ENCODE measurements at regions of chr6 and their contacts with region 1.

Region 1: DNA sequence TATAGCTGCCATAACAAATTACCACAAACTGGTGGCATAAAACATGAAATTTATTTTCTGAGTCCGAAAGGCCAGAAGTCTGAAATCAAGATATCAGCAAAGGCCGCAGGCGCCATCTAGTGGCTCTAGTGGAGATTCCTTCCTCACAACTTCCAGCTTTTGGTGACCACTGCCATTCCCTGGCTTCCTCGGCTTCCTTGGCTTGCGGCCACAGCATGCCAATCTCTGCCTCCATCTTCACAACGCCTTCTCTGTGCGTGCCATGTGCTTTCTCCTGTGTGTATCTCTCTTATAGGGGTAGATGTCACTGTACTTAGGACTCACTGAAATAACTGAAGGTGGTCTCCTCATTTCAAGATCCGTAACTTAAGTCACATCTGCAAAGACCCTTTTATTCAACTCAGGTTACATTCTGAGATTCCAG is 5.4 kb upstream of the PLAGL1 start:
- DNase-seq: peak; percentile 73
- ATAC-seq: peak; percentile 79
- H3K4me3 ChIP-seq: no peak overlapping the region
- H3K27ac ChIP-seq: no peak overlapping the region
- H3K4me1 ChIP-seq: 0 out of 4 replicates have a peak, but pooled peaks cover 0 to 3% of the 10 kb centered on the region in 2 experiments
- H3K27me3 ChIP-seq: no peaks in the 10 kb centered on the region
- CTCF ChIP-seq: peak; percentile 86 to 90 (median 89)
- POLR2A ChIP-seq: no peak
- RAD21 ChIP-seq: peak; percentile 96

Region 2: DNA sequence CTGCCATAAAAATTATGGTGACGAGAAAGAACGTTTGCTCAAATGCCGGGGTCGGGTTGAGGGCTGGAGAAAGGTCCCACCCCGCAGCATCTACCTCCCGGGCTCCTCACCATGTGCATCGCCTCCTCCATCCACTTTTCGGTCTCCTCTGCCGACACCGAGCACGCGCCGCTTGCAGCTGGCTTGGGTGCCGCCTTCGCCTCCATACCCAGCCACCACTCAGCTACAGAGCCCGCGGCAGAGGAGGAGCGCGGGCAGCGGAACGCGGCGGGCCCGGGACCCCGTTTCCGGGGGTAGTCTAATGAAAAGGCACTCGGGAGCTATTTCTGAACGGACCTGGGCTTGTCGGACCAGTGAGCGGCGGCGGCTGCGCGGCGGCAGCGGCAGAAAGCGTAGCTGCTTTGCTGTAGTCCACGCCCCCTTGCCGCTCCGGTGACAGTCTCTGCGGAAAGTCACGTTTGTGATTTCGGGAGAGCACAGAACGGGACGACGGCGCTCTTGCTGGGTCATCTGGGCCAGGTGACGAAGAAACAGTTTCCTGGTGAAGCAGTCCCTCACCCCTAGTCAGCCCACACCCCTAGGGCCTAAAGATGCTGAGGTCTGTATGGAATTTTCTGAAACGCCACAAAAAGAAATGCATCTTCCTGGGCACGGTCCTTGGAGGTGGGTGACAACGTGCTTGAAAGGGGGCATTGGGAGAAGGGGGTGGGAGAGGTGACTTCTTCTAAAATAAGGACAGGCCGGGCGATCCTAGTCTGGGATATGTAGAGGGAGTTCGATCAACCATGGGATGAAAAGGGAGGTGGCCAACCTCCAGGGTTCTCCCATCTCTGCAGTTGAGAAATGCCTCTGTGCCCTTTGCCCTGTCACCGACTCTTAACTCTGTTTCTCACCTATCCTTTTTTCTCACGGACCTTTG is 562.8 kb before region 1 on chr6 and contains the starts of genes ADAT2 and PEX3:
- CTCF ChIA-PET with region 1: no interaction called
- POLR2A ChIA-PET with region 1: no interaction called
- RAD21 ChIA-PET with region 1: no interaction called
- intact Hi-C with region 1: loop called (anchors 2 kb)
- DNase-seq: peak; percentile 90
- ATAC-seq: peak; percentile 98
- H3K4me3 ChIP-seq: peak within 1 kb of the TSS; percentile 62 to 95
- H3K27ac ChIP-seq: peak within 1 kb of the TSS; percentile 51
- H3K4me1 ChIP-seq: peaks cover 2 to 16% of the 10 kb centered on the region in 2 experiments; a peak in 2 of 4 replicates
- H3K27me3 ChIP-seq: no peaks in the 10 kb centered on the region
- CTCF ChIP-seq: no peak
- POLR2A ChIP-seq: peak; percentile 52
- RAD21 ChIP-seq: peak; percentile 40; the same call in 1 of the 2 replicates
- total RNA-seq, gene ADAT2: 18.4 TPM
- total RNA-seq, gene PEX3: 12.9 TPM

Region 3: DNA sequence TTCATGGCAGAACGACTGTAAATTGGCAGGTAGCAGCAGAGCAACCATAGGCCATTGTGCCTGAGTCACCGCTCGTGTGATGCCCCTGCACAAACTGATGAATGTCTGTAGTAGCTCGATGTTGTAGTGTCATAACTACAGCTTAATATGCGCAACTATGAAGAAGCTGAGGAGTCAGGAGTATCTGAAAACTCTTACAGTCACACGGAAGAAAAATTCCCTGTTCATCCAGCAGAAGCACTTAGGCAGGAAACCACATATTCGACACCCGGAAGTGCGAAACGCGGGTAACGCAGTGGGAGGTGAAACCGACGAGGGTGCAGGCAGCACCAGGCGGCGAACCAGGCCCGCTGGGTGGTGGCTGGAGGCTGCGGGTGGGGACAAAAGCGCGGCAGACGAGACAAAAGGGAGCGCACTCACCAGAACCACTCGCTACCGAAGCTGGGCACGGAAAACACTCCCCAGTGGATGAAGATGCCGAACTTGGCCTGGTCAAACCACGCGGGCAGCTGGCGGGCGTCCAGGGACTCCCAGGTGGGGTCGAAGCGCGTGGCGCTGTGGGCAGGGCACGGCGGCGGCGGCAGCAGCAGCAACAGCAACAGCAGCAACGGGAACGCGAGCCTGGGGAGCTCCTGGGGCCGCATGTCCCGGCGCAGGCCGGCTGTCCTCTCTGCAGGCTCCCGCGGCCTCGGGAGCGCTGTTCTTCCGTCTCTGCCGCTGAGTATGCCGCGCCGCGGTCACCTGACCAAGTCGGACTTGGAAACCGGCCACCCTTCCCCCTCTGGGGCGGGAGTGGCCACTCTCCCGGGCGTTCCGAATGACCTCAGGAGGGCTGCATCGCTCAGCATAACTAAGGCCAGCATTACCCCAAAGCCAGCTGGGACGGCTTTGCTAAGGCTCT is 502.3 kb before region 1 on chr6 and contains the start of gene FUCA2:
- CTCF ChIA-PET with region 1: interaction called, 3 read pairs
- POLR2A ChIA-PET with region 1: no interaction called
- RAD21 ChIA-PET with region 1: interaction called in 1 of 2 experiments, 3 read pairs
- intact Hi-C with region 1: loop called (anchors 1 kb)
- DNase-seq: peak; percentile 57
- ATAC-seq: peak; percentile 84
- H3K4me3 ChIP-seq: peak within 1 kb of the TSS; percentile 50 to 77
- H3K27ac ChIP-seq: peak within 1 kb of the TSS; percentile 85
- H3K4me1 ChIP-seq: peaks cover 2 to 21% of the 10 kb centered on the region in 2 experiments; a peak in 3 of 4 replicates
- H3K27me3 ChIP-seq: no peaks in the 10 kb centered on the region
- CTCF ChIP-seq: no peak
- POLR2A ChIP-seq: peak; percentile 85
- RAD21 ChIP-seq: no peak
- total RNA-seq, gene FUCA2: 75.4 TPM

Region 4: DNA sequence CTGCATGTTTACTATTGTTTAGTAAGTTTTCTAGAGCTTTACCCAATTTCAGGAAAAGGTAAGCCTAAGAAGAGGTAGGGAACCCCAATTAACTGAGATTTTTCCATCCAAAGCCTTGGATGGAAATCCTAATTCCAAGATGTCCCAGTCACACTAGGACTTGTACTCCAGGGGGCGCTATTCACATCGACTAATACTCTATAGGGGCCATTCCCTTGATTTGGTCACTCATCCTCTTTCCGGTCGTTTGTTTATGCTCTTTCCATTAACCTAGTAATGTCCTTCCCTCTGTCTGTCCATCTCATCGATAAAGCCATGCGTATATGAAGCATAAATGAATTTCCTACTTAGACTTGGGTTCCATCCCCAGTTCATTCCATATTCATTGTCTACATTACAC is 421.2 kb before region 1 on chr6:
- CTCF ChIA-PET with region 1: interaction called, 7 read pairs
- POLR2A ChIA-PET with region 1: no interaction called
- RAD21 ChIA-PET with region 1: no interaction called
- intact Hi-C with region 1: loop called (anchors 1 kb)
- DNase-seq: peak; percentile 23
- ATAC-seq: peak; percentile 80
- H3K4me3 ChIP-seq: no peak overlapping the region
- H3K27ac ChIP-seq: no peak overlapping the region
- H3K4me1 ChIP-seq: no peaks in the 10 kb centered on the region
- H3K27me3 ChIP-seq: no peaks in the 10 kb centered on the region
- CTCF ChIP-seq: peak; percentile 33 to 78 (median 61); a peak in 5 of 6 replicates
- POLR2A ChIP-seq: no peak
- RAD21 ChIP-seq: peak; percentile 60

Region 5: DNA sequence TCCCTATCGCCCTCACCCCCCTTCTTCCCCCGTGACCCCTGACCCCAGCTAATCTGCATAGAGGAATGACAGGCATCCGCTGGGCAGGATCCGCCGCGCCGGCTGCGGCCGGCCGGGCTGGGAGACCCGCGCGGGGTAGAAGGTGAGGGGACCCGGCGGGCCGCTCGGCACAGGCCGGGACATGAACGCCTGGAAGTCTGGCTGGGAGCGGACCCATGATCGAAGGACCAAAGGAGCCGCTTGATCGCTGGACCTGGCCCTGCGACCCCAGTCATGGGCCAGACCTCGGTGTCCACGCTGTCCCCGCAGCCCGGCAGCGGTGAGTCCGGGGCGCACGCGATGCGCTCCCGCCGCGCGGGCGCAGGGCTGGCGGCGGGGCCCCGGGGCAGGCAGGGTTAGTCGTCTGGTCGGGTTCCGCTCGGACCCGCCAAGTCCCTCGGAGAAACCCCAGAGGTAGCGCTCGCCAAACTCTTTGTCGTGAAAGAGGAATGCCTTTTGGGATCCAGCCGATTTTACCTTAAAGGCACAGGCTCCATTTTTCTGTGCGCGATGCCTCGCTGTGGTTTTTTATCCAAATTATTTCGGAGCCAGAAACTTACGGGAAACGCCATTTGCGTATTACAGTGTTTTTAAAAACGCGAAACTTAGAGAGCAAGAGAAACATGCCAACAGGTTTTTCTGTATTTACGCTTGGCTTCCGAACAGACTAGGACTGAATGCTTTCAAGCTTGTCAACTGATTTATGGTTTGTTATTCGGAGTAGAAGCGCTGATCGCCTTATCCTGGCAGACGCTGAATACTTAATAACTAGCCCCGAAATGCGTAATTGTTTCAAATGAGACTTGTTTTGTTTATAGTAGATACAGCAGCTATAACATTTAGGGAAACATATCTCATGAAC is 335.4 kb before region 1 on chr6 and contains the start of gene PHACTR2:
- CTCF ChIA-PET with region 1: no interaction called
- POLR2A ChIA-PET with region 1: no interaction called
- RAD21 ChIA-PET with region 1: no interaction called
- intact Hi-C with region 1: loop called (anchors 5 kb)
- DNase-seq: peak; percentile 54
- ATAC-seq: peak; percentile 80
- H3K4me3 ChIP-seq: peak within 1 kb of the TSS; percentile 77 to 80
- H3K27ac ChIP-seq: peak within 1 kb of the TSS; percentile 58
- H3K4me1 ChIP-seq: peaks cover 46 to 53% of the 10 kb centered on the region in 2 experiments
- H3K27me3 ChIP-seq: no peaks in the 10 kb centered on the region
- CTCF ChIP-seq: no peak
- POLR2A ChIP-seq: peak; percentile 35
- RAD21 ChIP-seq: no peak
- total RNA-seq, gene PHACTR2: 27.6 TPM